ENCODE measurements at regions of chr9 and their contacts with region 1.

Region 1: GRCh38 chr9:121545875-121546423 is 46.3 kb upstream of the GGTA1 start:
- DNase-seq: peak; percentile 63
- H3K4me3 ChIP-seq: peak overlapping the region; percentile 23; the same call in 1 of the 2 replicates
- CTCF ChIP-seq: peak; percentile 100

Region 2: GRCh38 chr9:121483049-121483448 is 62.9 kb before region 1 on chr9:
- CTCF ChIA-PET with region 1: no interaction called
- POLR2A ChIA-PET with region 1: no interaction called
- DNase-seq: no peak
- H3K4me3 ChIP-seq: no peak overlapping the region
- CTCF ChIP-seq: no peak

Region 3: GRCh38 chr9:121529237-121529987 is 16.5 kb before region 1 on chr9:
- CTCF ChIA-PET with region 1: interaction called, 28 read pairs
- POLR2A ChIA-PET with region 1: no interaction called
- DNase-seq: peak; percentile 70
- H3K4me3 ChIP-seq: no peak overlapping the region
- CTCF ChIP-seq: no peak

Region 4: GRCh38 chr9:121576281-121577075 is 30.5 kb after region 1 on chr9:
- CTCF ChIA-PET with region 1: interaction called, 10 read pairs
- POLR2A ChIA-PET with region 1: no interaction called
- DNase-seq: no peak
- H3K4me3 ChIP-seq: no peak overlapping the region
- CTCF ChIP-seq: no peak

Region 5: GRCh38 chr9:121640076-121640475 is 94.1 kb after region 1 on chr9:
- CTCF ChIA-PET with region 1: interaction called, 15 read pairs
- POLR2A ChIA-PET with region 1: no interaction called
- DNase-seq: no peak
- H3K4me3 ChIP-seq: no peak overlapping the region
- CTCF ChIP-seq: peak; percentile 45

Region 6: DNA sequence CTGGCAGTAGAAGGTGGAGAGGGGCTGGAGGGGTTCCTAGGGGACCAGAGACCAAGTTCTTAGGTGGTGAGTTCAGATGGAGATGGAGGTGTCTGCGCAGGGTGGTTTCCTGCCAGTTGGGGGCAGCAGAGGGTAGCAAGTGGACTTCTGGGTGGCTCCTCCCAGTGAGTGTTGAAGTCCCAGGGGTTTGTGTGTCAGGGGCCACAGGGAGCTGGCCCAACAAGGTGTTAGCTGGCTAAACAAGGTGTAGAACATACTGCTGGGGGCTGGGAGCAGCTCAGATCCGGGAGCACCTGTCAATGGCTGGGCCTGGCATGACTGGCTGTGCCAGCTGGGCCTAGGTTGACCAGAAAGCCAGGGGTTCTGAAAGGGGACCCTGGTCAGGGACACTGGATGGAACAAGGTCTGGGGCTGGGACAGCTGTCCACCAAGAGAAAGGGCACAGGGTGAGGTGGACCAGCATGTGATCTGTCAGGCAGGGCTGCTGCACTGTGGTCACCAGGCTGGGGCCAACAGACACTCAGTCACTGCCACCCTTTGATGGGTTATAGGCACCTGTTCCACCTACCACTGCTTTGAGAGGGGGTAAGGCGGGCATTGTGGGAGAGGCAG is 141.1 kb after region 1 on chr9:
- CTCF ChIA-PET with region 1: interaction called, 97 read pairs
- POLR2A ChIA-PET with region 1: interaction called, 4 read pairs
- DNase-seq: no peak
- H3K4me3 ChIP-seq: no peak overlapping the region
- CTCF ChIP-seq: peak; percentile 91

Region 7: DNA sequence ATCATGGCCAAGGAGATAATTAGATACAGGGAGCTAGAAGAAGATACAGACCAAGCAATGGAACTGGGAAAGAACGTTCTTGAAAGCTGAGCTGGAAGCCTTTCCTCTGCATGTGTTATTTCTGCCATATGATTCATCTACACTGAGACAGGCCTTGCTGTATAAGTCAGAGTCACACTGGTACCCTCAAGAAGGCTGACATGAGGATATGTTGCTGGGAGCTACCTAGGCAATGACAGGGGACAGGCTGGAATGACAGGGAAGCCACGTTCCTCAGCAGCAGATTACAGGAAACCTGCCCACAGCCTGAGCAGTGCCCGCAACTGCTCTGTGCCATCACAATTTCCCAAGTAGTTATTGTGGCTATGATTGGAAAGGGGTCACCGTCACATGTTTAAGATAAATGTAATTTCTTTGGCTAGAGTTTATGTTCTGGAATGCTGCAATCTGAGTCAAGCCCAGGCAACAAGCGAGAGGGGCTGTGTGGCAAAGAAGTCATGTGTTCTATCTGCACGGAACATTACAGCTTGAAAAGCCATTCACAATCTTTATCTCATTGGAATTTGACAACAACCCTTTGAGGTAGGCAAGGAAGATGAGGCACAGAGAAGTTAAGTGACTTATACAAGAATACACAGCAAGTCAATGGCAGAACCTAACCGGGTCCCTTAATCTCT is 438.9 kb after region 1 on chr9:
- CTCF ChIA-PET with region 1: interaction called, 26 read pairs
- POLR2A ChIA-PET with region 1: no interaction called
- DNase-seq: peak; percentile 77
- H3K4me3 ChIP-seq: no peak overlapping the region
- CTCF ChIP-seq: no peak

Region 8: GRCh38 chr9:122125158-122125508 is 579.2 kb after region 1 on chr9:
- CTCF ChIA-PET with region 1: interaction called, 75 read pairs
- POLR2A ChIA-PET with region 1: no interaction called
- DNase-seq: peak; percentile 17
- H3K4me3 ChIP-seq: no peak overlapping the region
- CTCF ChIP-seq: peak; percentile 93

Measured in AG04449 (cell line).